PC-3 (cell line): ENCODE measurements at regions of chr3 and their contacts with region 1.

Region 1: GRCh38 chr3:193872265-193872753 is 263.6 kb upstream of the HES1 start:
- DNase-seq: peak; percentile 99
- ATAC-seq: peak; percentile 68
- H3K4me3 ChIP-seq: no peak overlapping the region
- H3K27ac ChIP-seq: peak overlapping the region; percentile 76
- H3K4me1 ChIP-seq: peaks cover 47% of the 10 kb centered on the region
- H3K27me3 ChIP-seq: no peaks in the 10 kb centered on the region
- CTCF ChIP-seq: no peak

Region 2: DNA sequence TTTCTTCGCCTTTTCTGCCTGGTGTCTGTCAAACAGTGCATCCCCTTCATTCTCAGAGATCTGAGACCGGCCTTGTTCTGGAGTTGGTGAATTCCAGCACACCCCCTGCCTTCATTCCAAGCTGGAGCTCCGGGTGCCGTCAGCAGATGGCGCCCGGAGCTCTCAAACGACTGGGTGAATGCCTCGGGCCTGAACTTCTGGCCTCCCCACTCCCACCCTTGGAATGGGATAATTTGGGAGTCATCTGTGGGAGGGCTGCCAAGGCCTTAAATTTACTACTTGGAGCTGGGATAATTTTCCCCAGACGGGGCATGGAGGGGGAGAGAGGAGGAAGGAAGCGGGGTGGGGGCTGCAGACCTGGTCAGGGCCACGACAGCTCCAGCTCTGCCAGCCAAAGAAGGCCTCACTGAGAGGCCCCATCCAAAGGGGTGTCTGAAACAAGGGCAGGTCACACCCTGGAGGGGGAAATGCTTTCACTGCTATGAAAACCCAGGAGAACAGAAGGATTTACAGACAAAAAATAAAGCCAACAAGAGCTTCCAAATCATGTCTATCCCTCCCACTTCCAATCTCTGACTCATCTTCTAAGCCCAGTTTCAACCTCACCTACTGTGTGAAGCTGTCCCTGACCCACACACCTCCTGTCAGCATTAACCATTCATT is 91.4 kb before region 1 on chr3:
- CTCF ChIA-PET with region 1: interaction called, 3 read pairs
- POLR2A ChIA-PET with region 1: interaction called, 3 read pairs
- intact Hi-C with region 1: loop called (anchors 2 kb)
- DNase-seq: peak; percentile 95
- ATAC-seq: peak; percentile 84
- H3K4me3 ChIP-seq: no peak overlapping the region
- H3K27ac ChIP-seq: peak overlapping the region; percentile 78
- H3K4me1 ChIP-seq: peaks cover 47% of the 10 kb centered on the region
- H3K27me3 ChIP-seq: no peaks in the 10 kb centered on the region
- CTCF ChIP-seq: peak; percentile 97

Region 3: GRCh38 chr3:193831495-193832455 is 40.5 kb before region 1 on chr3:
- CTCF ChIA-PET with region 1: interaction called, 3 read pairs
- POLR2A ChIA-PET with region 1: interaction called, 3 read pairs
- intact Hi-C with region 1: loop called (anchors 2 kb)
- DNase-seq: no peak
- ATAC-seq: no peak
- H3K4me3 ChIP-seq: no peak overlapping the region
- H3K27ac ChIP-seq: no peak overlapping the region
- H3K4me1 ChIP-seq: peaks cover 45% of the 10 kb centered on the region
- H3K27me3 ChIP-seq: no peaks in the 10 kb centered on the region
- CTCF ChIP-seq: no peak

Region 4: GRCh38 chr3:193928354-193929209 is 56.3 kb after region 1 on chr3:
- CTCF ChIA-PET with region 1: no interaction called
- POLR2A ChIA-PET with region 1: no interaction called
- intact Hi-C with region 1: loop called (anchors 1 kb)
- DNase-seq: peak; percentile 87
- ATAC-seq: peak; percentile 94
- H3K4me3 ChIP-seq: peak overlapping the region; percentile 6; the same call in 1 of the 2 replicates
- H3K27ac ChIP-seq: peak overlapping the region; percentile 88
- H3K4me1 ChIP-seq: peaks cover 28% of the 10 kb centered on the region
- H3K27me3 ChIP-seq: no peaks in the 10 kb centered on the region
- CTCF ChIP-seq: no peak

Region 5: GRCh38 chr3:194070634-194071409 is 198.5 kb after region 1 on chr3:
- CTCF ChIA-PET with region 1: no interaction called
- POLR2A ChIA-PET with region 1: no interaction called
- intact Hi-C with region 1: loop called (anchors 2 kb)
- DNase-seq: peak; percentile 93
- ATAC-seq: peak; percentile 80
- H3K4me3 ChIP-seq: peak overlapping the region; percentile 60
- H3K27ac ChIP-seq: no peak overlapping the region
- H3K4me1 ChIP-seq: peaks cover 35% of the 10 kb centered on the region
- H3K27me3 ChIP-seq: no peaks in the 10 kb centered on the region
- CTCF ChIP-seq: no peak

Region 6: DNA sequence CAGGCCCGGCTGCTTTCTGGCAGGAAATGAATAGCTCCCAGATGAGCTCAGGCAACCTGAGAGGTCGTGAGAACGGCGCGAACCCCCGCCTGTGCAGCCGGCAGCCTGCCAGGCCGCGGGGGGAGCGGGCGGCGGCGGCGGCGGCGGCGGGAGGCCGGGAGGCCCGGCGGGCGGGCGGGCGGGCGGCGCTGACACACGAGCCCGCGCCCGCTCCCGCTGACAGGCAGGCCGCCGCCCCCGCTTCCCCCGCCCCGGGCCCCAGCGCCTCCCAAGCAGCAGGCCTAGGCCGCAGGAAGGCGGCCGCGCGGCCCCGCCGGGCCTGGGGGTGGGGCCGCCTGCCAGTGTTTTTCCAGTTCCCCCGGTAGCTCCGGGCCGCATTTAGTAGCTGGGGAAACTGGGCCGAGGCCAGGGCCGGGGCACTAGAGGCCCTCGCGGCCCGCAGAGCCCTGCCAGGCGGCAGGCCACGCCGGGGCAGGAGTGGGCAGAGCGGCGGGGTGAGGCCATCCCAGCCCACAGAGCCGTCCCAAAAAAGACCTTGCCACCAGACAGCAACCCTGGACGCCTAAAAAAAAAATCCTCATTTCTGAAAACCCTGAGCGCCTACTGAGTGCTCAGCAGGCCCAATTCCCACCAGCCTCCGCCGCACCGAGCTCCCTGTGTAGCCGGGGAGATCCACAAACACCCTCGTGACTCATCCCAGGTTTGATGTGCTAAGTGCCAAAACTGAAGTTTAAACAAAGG is 269.3 kb after region 1 on chr3:
- CTCF ChIA-PET with region 1: no interaction called
- POLR2A ChIA-PET with region 1: interaction called, 10 read pairs
- intact Hi-C with region 1: no loop called
- DNase-seq: peak; percentile 94
- ATAC-seq: peak; percentile 44
- H3K4me3 ChIP-seq: peak overlapping the region; percentile 53
- H3K27ac ChIP-seq: peak overlapping the region; percentile 87
- H3K4me1 ChIP-seq: peaks cover 45% of the 10 kb centered on the region
- H3K27me3 ChIP-seq: no peaks in the 10 kb centered on the region
- CTCF ChIP-seq: no peak